CD8-positive, alpha-beta T cell (primary cell): ENCODE measurements at regions of chr14 and their contacts with region 1.

Region 1: DNA sequence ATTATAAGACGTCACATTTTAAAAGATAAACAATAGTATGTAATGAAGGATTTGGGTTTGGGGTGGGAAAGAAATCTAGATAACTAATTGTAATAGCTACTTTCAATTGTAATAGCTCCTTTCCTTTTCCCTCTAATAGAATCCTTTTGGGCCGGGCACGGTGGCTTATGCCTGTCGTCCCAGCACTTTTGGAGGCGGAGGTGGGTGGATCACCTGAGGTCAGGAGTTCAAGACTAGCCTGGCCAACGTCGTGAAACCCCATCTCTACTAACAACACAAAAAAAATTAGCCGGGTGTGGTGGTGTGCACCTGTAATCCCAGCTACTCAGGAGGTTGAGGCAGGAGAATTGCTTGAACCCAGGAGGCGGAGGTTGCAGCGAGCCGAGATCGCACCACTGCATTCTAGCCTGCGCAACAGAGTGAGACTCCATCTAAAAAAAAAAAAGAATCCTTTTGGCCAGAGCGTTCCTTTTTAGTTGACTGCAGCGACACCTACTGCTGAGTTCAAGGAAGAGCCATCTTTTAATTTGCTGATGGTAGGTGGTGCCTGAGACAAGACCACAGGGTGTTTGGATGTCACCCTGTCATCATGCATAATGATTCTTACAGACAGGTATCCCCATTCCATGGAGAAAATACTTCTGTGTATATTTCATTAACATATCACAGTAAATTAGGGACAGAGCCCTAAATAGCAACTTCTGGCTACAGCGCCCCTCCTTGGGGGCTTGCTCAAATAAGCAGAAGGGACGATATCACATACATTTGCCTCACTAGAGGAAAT is 79.5 kb downstream of the ARMH4 start:
- DNase-seq: peak in 8 of 9 experiments; percentile 1 to 66 (median 27)
- ATAC-seq: peak; percentile 69
- H3K4me3 ChIP-seq: no peak overlapping the region
- H3K4me3 Mint-ChIP-seq: peak overlapping the region; percentile 16
- H3K27ac ChIP-seq: no peak overlapping the region
- H3K27ac Mint-ChIP-seq: no peak overlapping the region
- H3K4me1 ChIP-seq: no peaks in the 10 kb centered on the region
- H3K4me1 Mint-ChIP-seq: no peaks in the 10 kb centered on the region
- H3K27me3 ChIP-seq: no peaks in the 10 kb centered on the region
- H3K27me3 Mint-ChIP-seq: peaks cover 11% of the 10 kb centered on the region
- CTCF ChIP-seq: peak; percentile 56

Region 2: GRCh38 chr14:56659964-56660551 is 1412.4 kb before region 1 on chr14:
- CTCF ChIA-PET with region 1: no interaction called
- POLR2A ChIA-PET with region 1: no interaction called
- intact Hi-C with region 1: loop called in 1 of 2 experiments (anchors 10 kb)
- DNase-seq: peak in 2 of 9 experiments; percentile 3 to 8
- ATAC-seq: no peak
- H3K4me3 ChIP-seq: no peak overlapping the region
- H3K4me3 Mint-ChIP-seq: no peak overlapping the region
- H3K27ac ChIP-seq: no peak overlapping the region
- H3K27ac Mint-ChIP-seq: no peak overlapping the region
- H3K4me1 ChIP-seq: no peaks in the 10 kb centered on the region
- H3K4me1 Mint-ChIP-seq: no peaks in the 10 kb centered on the region
- H3K27me3 ChIP-seq: no peaks in the 10 kb centered on the region
- H3K27me3 Mint-ChIP-seq: no peaks in the 10 kb centered on the region
- CTCF ChIP-seq: no peak

Region 3: DNA sequence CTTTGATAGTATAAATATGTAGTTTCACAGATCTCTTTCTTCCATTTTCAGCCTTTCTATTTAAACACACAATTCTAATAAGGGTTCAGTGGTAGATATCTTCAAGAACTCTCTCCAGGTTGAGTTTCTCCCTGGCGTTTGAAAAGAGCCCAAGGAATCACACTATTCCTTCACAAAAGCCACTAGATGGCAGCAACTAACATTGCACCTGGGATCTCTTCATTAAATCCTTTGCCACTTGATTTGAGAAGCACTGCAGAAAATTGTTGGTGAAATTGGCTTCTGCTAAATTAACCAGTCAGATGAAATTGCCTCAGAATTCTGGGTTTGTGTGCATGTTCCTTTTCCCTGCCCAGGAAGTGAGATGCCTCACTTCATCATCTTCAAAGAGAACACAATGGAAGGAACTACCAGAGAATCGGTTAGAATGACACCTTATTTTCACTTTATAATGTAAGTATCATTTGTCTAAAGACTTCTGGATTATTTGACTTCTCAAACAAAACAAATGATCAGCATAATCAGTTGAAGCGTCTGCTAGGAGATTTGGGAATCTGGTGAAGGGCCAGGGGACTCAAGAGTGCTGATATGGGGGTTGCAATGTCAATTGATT is 585.6 kb before region 1 on chr14:
- CTCF ChIA-PET with region 1: no interaction called
- POLR2A ChIA-PET with region 1: no interaction called
- intact Hi-C with region 1: loop called (anchors 2 to 5 kb)
- DNase-seq: peak in 2 of 9 experiments; percentile 4 to 25
- ATAC-seq: no peak
- H3K4me3 ChIP-seq: no peak overlapping the region
- H3K4me3 Mint-ChIP-seq: no peak overlapping the region
- H3K27ac ChIP-seq: no peak overlapping the region
- H3K27ac Mint-ChIP-seq: no peak overlapping the region
- H3K4me1 ChIP-seq: no peaks in the 10 kb centered on the region
- H3K4me1 Mint-ChIP-seq: no peaks in the 10 kb centered on the region
- H3K27me3 ChIP-seq: no peaks in the 10 kb centered on the region
- H3K27me3 Mint-ChIP-seq: no peaks in the 10 kb centered on the region
- CTCF ChIP-seq: peak; percentile 32

Region 4: GRCh38 chr14:58060898-58061297 is 11.6 kb before region 1 on chr14:
- CTCF ChIA-PET with region 1: interaction called, 14 read pairs
- POLR2A ChIA-PET with region 1: no interaction called
- intact Hi-C with region 1: no loop called
- DNase-seq: no peak
- ATAC-seq: no peak
- H3K4me3 ChIP-seq: no peak overlapping the region
- H3K4me3 Mint-ChIP-seq: no peak overlapping the region
- H3K27ac ChIP-seq: no peak overlapping the region
- H3K27ac Mint-ChIP-seq: no peak overlapping the region
- H3K4me1 ChIP-seq: no peaks in the 10 kb centered on the region
- H3K4me1 Mint-ChIP-seq: no peaks in the 10 kb centered on the region
- H3K27me3 ChIP-seq: no peaks in the 10 kb centered on the region
- H3K27me3 Mint-ChIP-seq: peaks cover 6% of the 10 kb centered on the region
- CTCF ChIP-seq: no peak